ENCODE measurements at regions of chr2 and their contacts with region 1.

Region 1: GRCh38 chr2:20962939-20963557 is 80.8 kb downstream of the APOB start:
- DNase-seq: peak in 1 of 2 donors; percentile 80
- H3K4me3 ChIP-seq: no peak overlapping the region
- H3K27ac ChIP-seq: peak overlapping the region in 1 of 2 donors; percentile 69
- H3K4me1 ChIP-seq: peaks cover 8 to 18% of the 10 kb centered on the region in 2 donors
- H3K27me3 ChIP-seq: no peaks in the 10 kb centered on the region
- CTCF ChIP-seq: peak; percentile 72 to 83 (median 83)

Region 2: DNA sequence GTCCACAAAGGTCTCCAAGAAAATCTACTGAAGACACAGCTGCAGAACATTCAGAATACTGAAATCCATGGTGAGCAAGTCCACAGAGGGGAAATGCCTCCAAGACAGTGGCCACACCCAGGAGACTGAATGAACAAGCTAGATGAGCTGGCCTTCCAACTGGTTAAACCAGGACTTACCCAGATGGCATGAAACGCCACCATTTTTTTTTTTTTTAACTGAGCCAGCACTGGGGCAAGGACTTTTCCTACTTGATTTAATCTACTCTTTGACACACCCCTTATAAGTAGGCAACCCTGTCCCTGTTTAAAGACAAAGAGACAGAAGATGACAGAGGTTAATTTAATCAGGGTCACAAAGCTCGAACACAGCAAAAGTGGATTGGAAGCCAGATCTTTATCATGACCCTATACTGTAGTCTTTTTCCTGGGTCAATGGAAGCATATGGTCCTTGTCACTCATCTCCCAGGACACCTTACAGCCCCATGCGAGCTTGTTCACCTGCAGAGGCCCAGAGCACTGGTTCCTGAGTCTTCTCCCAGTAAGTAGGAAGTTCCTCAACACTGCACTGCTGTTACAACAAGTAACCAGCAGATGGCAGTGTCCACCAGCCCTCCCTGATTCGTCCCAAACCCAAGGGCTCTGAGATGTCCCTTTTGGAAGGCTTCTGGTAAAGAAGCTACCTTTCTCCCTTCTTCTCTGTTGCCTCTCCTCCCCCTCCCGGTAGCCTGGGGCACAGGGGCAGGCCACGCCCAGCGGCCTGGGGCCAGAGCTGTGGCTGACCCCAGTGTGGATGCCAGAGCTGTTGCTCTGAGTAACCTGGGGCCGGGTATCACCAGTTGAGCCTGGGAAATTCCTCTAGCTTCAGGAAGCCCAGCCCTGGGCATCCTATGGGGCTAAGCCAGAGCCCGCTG is 301.7 kb before region 1 on chr2:
- intact Hi-C with region 1: loop called (anchors 2 kb)
- DNase-seq: peak in 1 of 2 donors; percentile 88
- H3K4me3 ChIP-seq: no peak overlapping the region
- H3K27ac ChIP-seq: no peak overlapping the region
- H3K4me1 ChIP-seq: peaks cover 0 to 7% of the 10 kb centered on the region in 2 donors
- H3K27me3 ChIP-seq: no peaks in the 10 kb centered on the region
- CTCF ChIP-seq: peak; percentile 94 to 98 (median 96)

Region 3: GRCh38 chr2:20682167-20682920 is 280.7 kb before region 1 on chr2:
- intact Hi-C with region 1: loop called (anchors 1 kb)
- DNase-seq: no peak
- H3K4me3 ChIP-seq: no peak overlapping the region
- H3K27ac ChIP-seq: peak overlapping the region in 1 of 2 donors; percentile 34
- H3K4me1 ChIP-seq: peaks cover 3 to 22% of the 10 kb centered on the region in 2 donors
- H3K27me3 ChIP-seq: no peaks in the 10 kb centered on the region
- CTCF ChIP-seq: peak; percentile 49 to 75 (median 57)

Region 4: GRCh38 chr2:20723543-20723942 is 239.5 kb before region 1 on chr2:
- intact Hi-C with region 1: loop called (anchors 2 kb)
- DNase-seq: no peak
- H3K4me3 ChIP-seq: no peak overlapping the region
- H3K27ac ChIP-seq: peak overlapping the region; percentile 84 to 87
- H3K4me1 ChIP-seq: peaks cover 9 to 39% of the 10 kb centered on the region in 2 donors
- H3K27me3 ChIP-seq: no peaks in the 10 kb centered on the region
- CTCF ChIP-seq: no peak

Region 5: GRCh38 chr2:20781656-20782265 is 181.3 kb before region 1 on chr2:
- intact Hi-C with region 1: loop called (anchors 2 kb)
- DNase-seq: no peak
- H3K4me3 ChIP-seq: no peak overlapping the region
- H3K27ac ChIP-seq: no peak overlapping the region
- H3K4me1 ChIP-seq: no peaks in the 10 kb centered on the region
- H3K27me3 ChIP-seq: no peaks in the 10 kb centered on the region
- CTCF ChIP-seq: peak; percentile 20 to 64 (median 56)

Region 6: GRCh38 chr2:20796374-20796791 is 166.7 kb before region 1 on chr2:
- intact Hi-C with region 1: no loop called
- DNase-seq: no peak
- H3K4me3 ChIP-seq: no peak overlapping the region
- H3K27ac ChIP-seq: no peak overlapping the region
- H3K4me1 ChIP-seq: no peaks in the 10 kb centered on the region
- H3K27me3 ChIP-seq: no peaks in the 10 kb centered on the region
- CTCF ChIP-seq: no peak

Region 7: GRCh38 chr2:20822535-20823490 is 140.2 kb before region 1 on chr2 and contains the start of gene LDAH:
- intact Hi-C with region 1: loop called (anchors 5 kb)
- DNase-seq: peak; percentile 66 to 95
- H3K4me3 ChIP-seq: peak within 1 kb of the TSS; percentile 92 to 97
- H3K27ac ChIP-seq: peak within 1 kb of the TSS; percentile 96 to 97
- H3K4me1 ChIP-seq: peaks cover 0 to 3% of the 10 kb centered on the region in 2 donors
- H3K27me3 ChIP-seq: no peaks in the 10 kb centered on the region
- CTCF ChIP-seq: no peak
- total RNA-seq, gene LDAH: 15.6 TPM

Region 8: DNA sequence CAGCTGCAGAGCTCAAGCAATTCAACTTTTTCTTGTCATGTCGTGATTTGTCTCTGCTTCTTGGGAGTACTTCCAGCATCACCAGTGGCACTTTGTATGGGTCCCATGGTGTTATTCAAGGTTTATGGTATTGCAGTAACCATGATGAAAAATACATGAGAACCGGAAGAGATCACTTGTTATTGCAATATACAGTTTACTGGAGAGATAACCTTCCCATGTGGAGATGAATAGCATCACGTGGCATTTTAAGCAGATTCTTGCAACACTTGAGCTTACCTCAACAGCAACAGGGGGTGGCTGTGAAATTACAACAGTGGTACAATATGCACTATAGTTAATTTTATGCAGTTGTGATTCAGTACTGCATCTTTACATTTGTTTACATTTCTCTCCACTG is 16.6 kb before region 1 on chr2:
- intact Hi-C with region 1: no loop called
- DNase-seq: no peak
- H3K4me3 ChIP-seq: no peak overlapping the region
- H3K27ac ChIP-seq: no peak overlapping the region
- H3K4me1 ChIP-seq: peaks cover 0 to 4% of the 10 kb centered on the region in 2 donors
- H3K27me3 ChIP-seq: no peaks in the 10 kb centered on the region
- CTCF ChIP-seq: no peak

Region 9: DNA sequence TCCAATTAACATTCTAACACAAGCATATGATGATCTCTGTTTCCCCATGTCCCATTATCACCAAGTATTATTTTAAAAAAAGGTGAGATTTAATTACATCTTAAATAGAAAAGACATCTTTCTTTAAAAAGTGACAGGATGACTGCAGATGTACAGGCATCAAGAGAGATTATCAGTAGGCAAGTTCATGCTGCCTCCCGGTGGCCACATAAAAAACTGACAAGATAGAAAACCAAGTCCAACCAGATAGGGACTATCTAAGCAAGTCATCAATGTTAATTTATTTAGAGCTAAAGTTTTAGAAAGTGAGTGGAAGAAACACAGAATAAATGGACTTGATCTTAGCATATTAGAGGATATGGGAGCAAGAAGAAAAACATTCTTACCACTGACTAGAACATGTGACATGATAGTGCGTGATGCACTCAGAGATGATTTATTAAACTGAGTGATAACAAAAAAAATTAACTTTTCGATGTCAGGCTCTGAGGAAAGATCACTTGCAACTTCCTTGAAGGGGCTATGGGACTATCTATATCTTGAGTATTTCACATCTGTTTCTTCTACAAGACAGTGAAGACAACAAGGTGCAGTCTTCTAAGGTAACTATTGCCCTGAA is 155.4 kb after region 1 on chr2:
- intact Hi-C with region 1: loop called (anchors 2 kb)
- DNase-seq: peak in 1 of 2 donors; percentile 63
- H3K4me3 ChIP-seq: no peak overlapping the region
- H3K27ac ChIP-seq: no peak overlapping the region
- H3K4me1 ChIP-seq: no peaks in the 10 kb centered on the region
- H3K27me3 ChIP-seq: no peaks in the 10 kb centered on the region
- CTCF ChIP-seq: peak; percentile 37 to 66 (median 55)

Measured in ascending aorta (tissue), 2 donors.